Prostate gland (tissue), 2 donors: ENCODE measurements at regions of chr4 and their contacts with region 1.

Region 1: GRCh38 chr4:41611881-41612871 is 74.2 kb downstream of the LIMCH1 start:
- DNase-seq: peak; percentile 47
- H3K4me3 ChIP-seq: no peak overlapping the region
- H3K27ac ChIP-seq: no peak overlapping the region
- H3K4me1 ChIP-seq: no peaks in the 10 kb centered on the region
- H3K27me3 ChIP-seq: no peaks in the 10 kb centered on the region
- CTCF ChIP-seq: no peak
- POLR2A ChIP-seq: no peak

Region 2: DNA sequence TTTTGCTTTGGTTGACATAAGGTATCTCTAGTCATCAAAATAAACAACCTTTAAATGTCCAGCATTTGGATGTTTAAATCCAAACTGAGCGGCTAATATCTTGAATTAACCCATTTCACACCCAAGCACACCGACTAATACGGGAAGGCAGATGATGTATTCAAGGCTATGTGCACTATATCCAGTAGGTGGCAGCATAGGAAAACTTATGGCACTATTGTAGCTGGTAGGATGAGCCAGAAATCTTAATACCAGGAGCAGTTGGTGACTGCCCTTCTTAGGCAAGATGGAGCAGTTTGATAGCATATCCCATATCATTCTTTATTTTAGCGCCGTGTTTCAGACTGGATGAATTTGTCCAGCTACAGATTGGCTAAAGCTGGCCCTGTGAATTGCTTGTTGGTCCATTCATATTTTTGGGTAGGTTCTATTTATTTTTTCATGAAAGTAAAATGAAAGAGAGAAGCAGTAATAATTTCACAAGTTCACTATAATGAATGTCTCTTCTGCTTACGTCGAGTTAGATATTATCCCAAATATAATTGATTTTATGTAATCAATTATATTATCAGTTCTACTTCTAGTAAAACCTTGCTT is 331.0 kb before region 1 on chr4:
- intact Hi-C with region 1: no loop called
- DNase-seq: peak; percentile 72
- H3K4me3 ChIP-seq: no peak overlapping the region
- H3K27ac ChIP-seq: no peak overlapping the region
- H3K4me1 ChIP-seq: no peaks in the 10 kb centered on the region
- H3K27me3 ChIP-seq: no peaks in the 10 kb centered on the region
- CTCF ChIP-seq: peak; percentile 60 to 94 (median 88)
- POLR2A ChIP-seq: no peak

Region 3: GRCh38 chr4:41427306-41427882 is 184.8 kb before region 1 on chr4:
- intact Hi-C with region 1: loop called (anchors 5 kb)
- DNase-seq: no peak
- H3K4me3 ChIP-seq: no peak overlapping the region
- H3K27ac ChIP-seq: peak overlapping the region in 1 of 2 donors; percentile 37
- H3K4me1 ChIP-seq: peaks cover 7% of the 10 kb centered on the region
- H3K27me3 ChIP-seq: no peaks in the 10 kb centered on the region
- CTCF ChIP-seq: no peak
- POLR2A ChIP-seq: no peak

Region 4: GRCh38 chr4:41734366-41734765 is 122.2 kb after region 1 on chr4:
- intact Hi-C with region 1: no loop called
- DNase-seq: no peak
- H3K4me3 ChIP-seq: no peak overlapping the region
- H3K27ac ChIP-seq: no peak overlapping the region
- H3K4me1 ChIP-seq: no peaks in the 10 kb centered on the region
- H3K27me3 ChIP-seq: peaks cover 3% of the 10 kb centered on the region
- CTCF ChIP-seq: no peak
- POLR2A ChIP-seq: no peak

Region 5: DNA sequence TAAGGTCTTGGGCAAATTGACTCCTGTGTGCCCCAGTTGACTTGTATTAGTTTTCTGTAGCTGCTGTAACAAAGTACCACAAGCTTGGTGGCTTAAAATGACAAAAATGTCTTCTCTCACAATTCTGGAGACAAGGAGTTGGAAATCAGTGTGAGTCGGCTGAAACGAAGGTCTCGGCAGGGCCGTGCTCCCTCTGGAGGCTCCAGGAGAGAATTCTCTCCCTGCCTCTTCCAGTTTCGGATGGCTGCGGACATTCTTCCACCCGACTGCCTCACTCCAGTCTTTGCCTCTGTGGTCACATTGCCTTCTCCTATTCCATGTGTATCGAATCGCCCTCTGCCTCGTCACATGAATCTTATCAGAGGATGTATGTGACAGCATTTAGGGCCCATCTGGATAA is 202.4 kb after region 1 on chr4:
- intact Hi-C with region 1: no loop called
- DNase-seq: no peak
- H3K4me3 ChIP-seq: no peak overlapping the region
- H3K27ac ChIP-seq: no peak overlapping the region
- H3K4me1 ChIP-seq: no peaks in the 10 kb centered on the region
- H3K27me3 ChIP-seq: peaks cover 3% of the 10 kb centered on the region
- CTCF ChIP-seq: peak in 1 of 4 experiments; percentile 9
- POLR2A ChIP-seq: no peak

Region 6: DNA sequence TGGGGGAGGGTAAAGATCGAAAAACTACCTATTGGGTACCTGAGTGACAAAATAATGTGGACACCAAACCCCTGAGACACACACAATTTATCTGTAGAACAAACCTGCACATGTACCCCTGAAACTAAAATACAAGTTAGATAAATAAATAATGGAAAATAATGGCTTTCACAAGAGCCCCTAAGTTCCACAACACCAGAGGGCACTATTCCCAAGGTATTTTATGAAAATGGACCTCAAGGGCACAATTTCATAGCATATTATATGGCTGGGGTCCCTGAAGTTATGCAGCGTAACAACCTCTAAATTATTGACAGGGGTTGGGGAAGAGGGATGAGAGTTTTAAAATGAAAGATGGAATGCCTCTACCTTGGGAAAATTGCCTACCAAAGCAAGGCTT is 241.8 kb after region 1 on chr4:
- intact Hi-C with region 1: no loop called
- DNase-seq: no peak
- H3K4me3 ChIP-seq: no peak overlapping the region
- H3K27ac ChIP-seq: no peak overlapping the region
- H3K4me1 ChIP-seq: no peaks in the 10 kb centered on the region
- H3K27me3 ChIP-seq: no peaks in the 10 kb centered on the region
- CTCF ChIP-seq: no peak
- POLR2A ChIP-seq: no peak